Activated naive CD4-positive, alpha-beta T cell treated with anti-CD3 and anti-CD28 coated beads, Interleukin-2, amount 10 ng/mL, durations not matched to agents 7 days and 5 days (primary cell): ENCODE measurements at regions of chr2 and their contacts with region 1.

Region 1: GRCh38 chr2:10434886-10435819 is 13.0 kb downstream of the ODC1 start:
- DNase-seq: peak; percentile 73
- H3K4me3 Mint-ChIP-seq: no peak overlapping the region
- H3K27ac Mint-ChIP-seq: no peak overlapping the region
- H3K4me1 Mint-ChIP-seq: peaks cover 13% of the 10 kb centered on the region
- H3K27me3 Mint-ChIP-seq: peaks cover 46% of the 10 kb centered on the region

Region 2: DNA sequence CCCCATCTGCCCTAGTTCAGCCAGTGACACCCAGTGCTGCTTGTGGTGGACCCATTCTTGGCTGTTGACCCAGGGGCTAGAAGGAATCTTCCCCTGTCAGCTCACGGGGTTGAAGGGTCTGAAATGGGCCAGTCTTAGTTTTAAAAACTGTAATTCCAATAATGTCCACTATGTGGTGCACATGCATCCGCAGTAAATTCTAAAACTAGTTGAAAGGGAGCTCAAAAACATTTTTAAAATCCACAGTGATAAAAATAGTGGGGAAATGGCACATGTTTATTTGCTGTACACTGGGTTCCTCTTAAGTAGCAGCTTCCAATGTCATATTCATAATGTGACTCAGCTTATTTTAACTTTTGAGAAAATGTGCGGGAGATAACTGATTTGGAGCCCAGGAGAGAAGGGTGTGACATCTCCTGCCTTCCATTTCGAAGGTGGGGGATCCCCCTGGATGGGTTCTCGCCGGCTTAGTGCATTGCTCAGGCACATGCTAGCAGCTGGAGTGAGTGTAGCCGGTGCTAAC is 450.9 kb before region 1 on chr2:
- CTCF ChIA-PET with region 1: interaction called, 12 read pairs
- DNase-seq: no peak
- H3K4me3 Mint-ChIP-seq: no peak overlapping the region
- H3K27ac Mint-ChIP-seq: no peak overlapping the region
- H3K4me1 Mint-ChIP-seq: peaks cover 14% of the 10 kb centered on the region
- H3K27me3 Mint-ChIP-seq: peaks cover 40% of the 10 kb centered on the region

Region 3: DNA sequence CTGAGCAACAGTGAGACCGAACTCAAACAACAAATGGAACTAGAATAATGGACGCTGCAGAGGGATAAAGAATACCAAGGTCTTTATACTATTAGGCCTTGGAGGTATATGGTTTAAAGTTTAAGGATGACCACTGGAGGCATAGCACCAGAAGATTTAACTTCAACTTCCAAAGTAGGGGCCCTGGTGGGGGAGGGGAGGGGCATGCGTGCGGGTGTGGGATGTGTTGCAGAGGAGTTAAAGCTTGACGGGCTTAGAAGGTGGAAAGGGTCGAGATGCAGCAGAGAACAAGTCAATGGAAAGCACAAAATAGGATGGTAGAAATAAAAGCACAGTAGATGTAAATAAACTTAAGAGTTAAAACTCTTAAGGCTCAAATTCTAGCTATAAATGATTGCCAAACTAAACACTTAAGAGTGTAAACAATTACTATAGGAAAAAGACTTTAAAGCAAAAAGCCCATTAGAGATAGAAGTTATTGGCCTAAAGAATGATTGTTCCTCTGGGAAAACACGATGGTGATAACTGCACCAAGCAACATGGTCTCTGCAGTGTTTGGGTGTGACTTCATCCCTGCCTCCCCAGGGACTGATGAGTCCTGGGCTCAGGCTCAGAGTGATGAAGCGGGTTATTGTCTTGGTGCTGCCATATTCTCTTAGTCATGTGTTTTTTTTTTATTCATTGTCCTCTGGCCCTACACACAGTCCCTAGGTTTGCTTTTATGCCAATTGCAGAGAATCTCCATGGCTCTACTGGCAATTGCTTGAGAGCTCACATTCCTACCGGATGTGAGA is 299.7 kb before region 1 on chr2:
- CTCF ChIA-PET with region 1: interaction called, 33 read pairs
- DNase-seq: no peak
- H3K4me3 Mint-ChIP-seq: no peak overlapping the region
- H3K27ac Mint-ChIP-seq: peak overlapping the region; percentile 68
- H3K4me1 Mint-ChIP-seq: peaks cover 53% of the 10 kb centered on the region
- H3K27me3 Mint-ChIP-seq: no peaks in the 10 kb centered on the region

Region 4: GRCh38 chr2:10161206-10161931 is 273.8 kb before region 1 on chr2:
- CTCF ChIA-PET with region 1: interaction called, 13 read pairs
- DNase-seq: no peak
- H3K4me3 Mint-ChIP-seq: no peak overlapping the region
- H3K27ac Mint-ChIP-seq: peak overlapping the region; percentile 53
- H3K4me1 Mint-ChIP-seq: peaks cover 26% of the 10 kb centered on the region
- H3K27me3 Mint-ChIP-seq: no peaks in the 10 kb centered on the region

Region 5: GRCh38 chr2:10448208-10448645 is 13.1 kb after region 1 on chr2 and contains the start of gene ODC1:
- CTCF ChIA-PET with region 1: interaction called, 31 read pairs
- DNase-seq: peak; percentile 97
- H3K4me3 Mint-ChIP-seq: peak within 1 kb of the TSS; percentile 87
- H3K27ac Mint-ChIP-seq: peak within 1 kb of the TSS; percentile 94
- H3K4me1 Mint-ChIP-seq: peaks cover 44% of the 10 kb centered on the region
- H3K27me3 Mint-ChIP-seq: no peaks in the 10 kb centered on the region

Region 6: GRCh38 chr2:10832203-10832936 is 397.2 kb after region 1 on chr2:
- CTCF ChIA-PET with region 1: no interaction called
- DNase-seq: peak; percentile 87
- H3K4me3 Mint-ChIP-seq: no peak overlapping the region
- H3K27ac Mint-ChIP-seq: no peak overlapping the region
- H3K4me1 Mint-ChIP-seq: peaks cover 4% of the 10 kb centered on the region
- H3K27me3 Mint-ChIP-seq: peaks cover 64% of the 10 kb centered on the region